CD8-positive, alpha-beta T cell (primary cell): ENCODE measurements at regions of chr22 and their contacts with region 1.

Region 1: DNA sequence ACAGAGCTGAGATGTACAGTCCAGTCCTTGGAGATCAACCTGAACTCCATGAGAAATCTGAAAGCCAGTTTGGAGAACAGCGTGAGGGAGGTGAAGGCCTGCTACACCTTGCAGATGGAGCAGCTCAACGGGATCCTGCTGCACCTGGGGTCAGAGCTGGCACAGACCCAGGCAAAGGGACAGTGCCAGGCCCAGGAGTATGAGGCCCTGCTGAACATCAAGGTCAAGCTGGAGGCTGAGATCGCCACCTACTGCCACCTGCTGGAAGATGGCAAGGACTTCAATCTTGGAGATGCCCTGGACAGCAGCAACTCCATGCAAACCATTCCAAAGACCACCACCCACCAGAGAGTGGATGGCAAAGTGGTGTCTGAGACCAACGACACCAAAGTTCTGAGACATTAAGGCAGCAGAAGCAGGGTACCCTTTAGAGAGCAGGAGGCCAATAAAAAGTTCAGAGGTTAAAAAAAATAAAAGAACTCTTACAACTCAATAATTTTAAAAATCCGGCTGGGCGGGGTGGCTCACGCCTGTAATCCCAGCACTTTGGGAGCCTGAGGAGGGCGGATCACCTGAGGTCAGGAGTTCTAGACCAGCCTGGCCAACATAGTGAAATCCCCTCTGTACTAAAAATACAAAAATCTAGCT is 69.9 kb upstream of the RTL6 start:
- DNase-seq: peak; percentile 16 to 72 (median 57)
- ATAC-seq: no peak
- H3K4me3 ChIP-seq: no peak overlapping the region
- H3K4me3 Mint-ChIP-seq: no peak overlapping the region
- H3K27ac ChIP-seq: no peak overlapping the region
- H3K27ac Mint-ChIP-seq: no peak overlapping the region
- H3K4me1 ChIP-seq: no peaks in the 10 kb centered on the region
- H3K4me1 Mint-ChIP-seq: no peaks in the 10 kb centered on the region
- H3K27me3 ChIP-seq: no peaks in the 10 kb centered on the region
- H3K27me3 Mint-ChIP-seq: peaks cover 7% of the 10 kb centered on the region
- CTCF ChIP-seq: peak; percentile 49

Region 2: GRCh38 chr22:44410451-44411061 is 157.4 kb before region 1 on chr22:
- CTCF ChIA-PET with region 1: no interaction called
- POLR2A ChIA-PET with region 1: no interaction called
- intact Hi-C with region 1: loop called in 1 of 2 experiments (anchors 10 kb)
- DNase-seq: no peak
- ATAC-seq: no peak
- H3K4me3 ChIP-seq: no peak overlapping the region
- H3K4me3 Mint-ChIP-seq: no peak overlapping the region
- H3K27ac ChIP-seq: no peak overlapping the region
- H3K27ac Mint-ChIP-seq: no peak overlapping the region
- H3K4me1 ChIP-seq: no peaks in the 10 kb centered on the region
- H3K4me1 Mint-ChIP-seq: no peaks in the 10 kb centered on the region
- H3K27me3 ChIP-seq: no peaks in the 10 kb centered on the region
- H3K27me3 Mint-ChIP-seq: no peaks in the 10 kb centered on the region
- CTCF ChIP-seq: no peak